GM23248 (cell line): ENCODE measurements at regions of chr9 and their contacts with region 1.

Region 1: GRCh38 chr9:4339357-4339756 is 39.5 kb upstream of the GLIS3 start:
- DNase-seq: peak; percentile 89
- H3K4me3 ChIP-seq: no peak overlapping the region
- H3K27ac ChIP-seq: no peak overlapping the region
- H3K4me1 ChIP-seq: no peaks in the 10 kb centered on the region
- H3K27me3 ChIP-seq: no peaks in the 10 kb centered on the region

Region 2: GRCh38 chr9:3848445-3849114 is 490.8 kb before region 1 on chr9:
- in situ Hi-C with region 1: no loop called
- DNase-seq: peak; percentile 39
- H3K4me3 ChIP-seq: no peak overlapping the region
- H3K27ac ChIP-seq: no peak overlapping the region
- H3K4me1 ChIP-seq: no peaks in the 10 kb centered on the region
- H3K27me3 ChIP-seq: no peaks in the 10 kb centered on the region

Region 3: GRCh38 chr9:4435197-4435596 is 95.8 kb after region 1 on chr9:
- in situ Hi-C with region 1: loop called (anchors 25 kb)
- DNase-seq: peak; percentile 92
- H3K4me3 ChIP-seq: no peak overlapping the region
- H3K27ac ChIP-seq: peak overlapping the region; percentile 64
- H3K4me1 ChIP-seq: peaks cover 17% of the 10 kb centered on the region
- H3K27me3 ChIP-seq: no peaks in the 10 kb centered on the region